ENCODE measurements at regions of chr15 and their contacts with region 1.

Region 1: DNA sequence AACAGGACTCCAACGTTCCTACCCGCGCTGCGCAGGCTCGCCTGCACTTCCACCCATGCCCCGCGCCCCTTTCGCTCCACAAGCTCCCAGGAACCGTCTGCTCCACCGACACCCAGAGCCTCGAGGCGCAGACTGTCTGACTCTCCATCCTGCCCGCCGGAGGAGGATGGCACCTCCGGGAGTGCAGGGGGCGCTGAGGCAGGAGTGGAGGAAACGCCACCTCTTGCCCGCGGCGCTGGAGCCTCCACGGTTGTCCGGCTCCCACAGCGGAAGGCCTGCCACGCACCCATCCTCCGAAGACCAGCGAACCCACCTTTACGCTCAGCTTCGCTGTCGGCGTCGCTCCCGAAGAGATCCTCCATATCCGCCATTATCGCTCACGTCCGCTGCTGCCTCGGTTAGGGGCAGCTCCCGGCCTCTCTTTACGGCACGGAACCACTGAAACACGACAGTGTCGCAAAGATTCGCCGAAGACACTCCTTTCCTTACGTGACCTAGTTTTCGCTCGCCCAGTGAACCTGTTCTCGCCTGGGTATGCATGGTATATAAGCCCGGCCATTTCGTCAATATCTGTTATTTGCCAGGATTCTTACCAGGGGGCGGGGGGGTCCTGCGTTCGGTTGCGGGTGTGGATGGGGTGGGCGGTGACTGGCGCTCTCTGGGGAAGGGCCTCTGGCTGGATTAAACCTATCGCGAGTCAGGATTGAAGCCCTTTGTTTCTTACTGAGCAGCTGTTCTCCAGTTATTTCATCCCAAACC is at the start of gene LEO1:
- DNase-seq: peak; percentile 89
- H3K4me3 ChIP-seq: peak within 1 kb of the TSS; percentile 74 to 95
- H3K27ac ChIP-seq: peak within 1 kb of the TSS; percentile 94 to 95
- H3K4me1 ChIP-seq: peaks cover 0 to 5% of the 10 kb centered on the region in 2 experiments; a peak in 2 of 4 replicates
- H3K27me3 ChIP-seq: no peaks in the 10 kb centered on the region
- CTCF ChIP-seq: peak; percentile 58
- EP300 ChIP-seq: no peak; a peak in 1 of 4 replicates
- RAD21 ChIP-seq: no peak
- polyA plus RNA-seq, gene LEO1: 6.7 and 7.0 TPM in 2 replicates

Region 2: GRCh38 chr15:51982013-51982769 is 10.6 kb after region 1 on chr15:
- CTCF ChIA-PET with region 1: interaction called, 9 read pairs
- POLR2A ChIA-PET with region 1: interaction called, 18 read pairs
- DNase-seq: peak; percentile 75
- H3K4me3 ChIP-seq: peak overlapping the region; percentile 22 to 58; a peak in 3 of 4 replicates
- H3K27ac ChIP-seq: peak overlapping the region; percentile 86 to 97
- H3K4me1 ChIP-seq: peaks cover 0 to 3% of the 10 kb centered on the region in 2 experiments; a peak in 2 of 4 replicates
- H3K27me3 ChIP-seq: no peaks in the 10 kb centered on the region
- CTCF ChIP-seq: peak; percentile 75
- EP300 ChIP-seq: peak; percentile 13 to 58; a peak in 3 of 4 replicates
- RAD21 ChIP-seq: peak; percentile 86

Region 3: DNA sequence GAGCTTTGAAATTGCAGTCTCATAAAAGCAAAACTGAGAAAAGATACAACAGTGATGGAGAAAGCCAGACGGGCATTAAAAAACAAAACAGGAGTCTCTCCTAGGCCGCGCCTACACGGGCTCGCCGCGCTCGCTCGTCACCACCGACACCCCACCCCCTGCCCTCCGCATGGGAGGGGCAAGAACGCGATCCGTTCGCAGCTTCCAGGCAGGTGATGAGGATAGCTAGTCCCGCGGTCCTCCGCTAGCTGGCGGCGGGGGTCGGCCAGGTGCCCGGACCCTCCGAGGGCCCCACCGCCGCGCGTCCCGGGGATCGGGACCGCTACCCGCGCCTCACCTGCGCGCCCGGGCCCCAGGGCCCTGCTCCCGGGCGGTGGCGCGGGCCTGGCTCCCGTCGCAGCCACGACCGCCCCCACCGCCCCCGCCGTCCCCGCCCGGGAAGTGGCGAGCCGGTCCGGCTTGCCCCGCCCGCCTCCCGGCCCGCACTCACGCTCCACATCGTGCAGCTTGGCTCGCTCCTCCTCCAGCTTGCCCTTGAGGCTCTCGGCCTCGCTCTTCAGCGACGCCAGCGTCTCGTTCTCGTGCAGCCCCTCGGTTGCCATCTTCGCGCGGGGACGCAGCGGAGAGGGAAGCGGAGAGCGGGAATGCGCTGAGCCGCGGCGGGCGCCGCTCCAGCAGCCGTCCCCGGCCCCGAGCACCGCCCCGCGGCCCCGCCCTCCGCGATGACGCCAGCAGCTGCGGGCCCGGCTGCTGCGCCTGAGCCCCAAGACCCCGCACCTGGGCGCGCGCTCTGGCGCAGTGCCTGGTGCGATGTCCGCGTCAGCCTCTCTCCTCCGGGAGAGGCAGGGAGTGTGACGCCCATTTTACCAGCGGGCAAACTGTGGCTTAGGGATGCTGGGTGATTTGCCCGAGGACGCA is 208.0 kb after region 1 on chr15:
- CTCF ChIA-PET with region 1: interaction called, 3 read pairs
- POLR2A ChIA-PET with region 1: interaction called, 11 read pairs
- DNase-seq: peak; percentile 95
- H3K4me3 ChIP-seq: peak overlapping the region; percentile 75 to 84
- H3K27ac ChIP-seq: peak overlapping the region; percentile 73 to 88
- H3K4me1 ChIP-seq: peaks cover 7 to 11% of the 10 kb centered on the region in 2 experiments; a peak in 1 of 4 replicates
- H3K27me3 ChIP-seq: no peaks in the 10 kb centered on the region
- CTCF ChIP-seq: no peak
- EP300 ChIP-seq: no peak
- RAD21 ChIP-seq: no peak

Measured in SK-N-SH (cell line).